Activated naive CD8-positive, alpha-beta T cell treated with anti-CD3 and anti-CD28 coated beads, Interleukin-2, amount 10 ng/mL, durations not matched to agents 7 days and 5 days (primary cell): ENCODE measurements at regions of chr9 and their contacts with region 1.

Region 1: DNA sequence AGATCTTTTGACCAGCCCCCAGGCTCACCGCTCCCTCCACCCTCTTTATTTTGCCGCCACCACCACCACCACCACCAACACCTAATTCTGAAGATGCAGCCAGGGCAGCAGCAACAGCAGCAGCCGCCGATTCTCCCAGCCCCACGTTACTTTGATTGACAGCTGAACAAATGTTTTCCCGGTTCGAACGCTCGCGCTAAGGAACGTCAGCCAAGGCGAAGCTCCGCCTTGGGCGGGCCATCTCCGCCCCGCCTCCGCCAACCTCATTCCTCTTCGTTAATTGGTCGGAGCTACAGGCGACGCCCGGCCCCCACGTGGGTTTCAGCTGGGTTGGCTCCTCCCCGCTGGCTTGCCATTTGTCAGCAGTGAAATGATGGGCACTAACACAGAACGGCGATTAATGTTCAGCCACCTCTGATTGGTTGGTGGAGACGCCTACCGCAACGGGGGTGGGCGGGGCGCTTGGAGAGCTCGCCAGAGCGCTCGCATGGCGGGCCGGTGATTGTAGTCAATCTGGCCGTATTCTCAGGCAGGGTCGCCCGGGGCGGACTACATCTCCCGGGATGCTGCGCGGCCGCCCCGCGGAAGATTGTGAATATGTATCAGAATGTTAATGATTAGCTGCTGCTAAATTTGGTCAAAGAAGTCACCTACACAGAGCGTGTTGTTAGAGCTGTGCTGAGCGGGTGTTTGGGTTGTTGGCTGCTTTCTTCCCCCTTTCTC is at the start of gene TLE4:
- DNase-seq: peak; percentile 97
- ATAC-seq: peak; percentile 88
- H3K4me3 Mint-ChIP-seq: peak within 1 kb of the TSS; percentile 67
- H3K27ac Mint-ChIP-seq: peak within 1 kb of the TSS; percentile 84
- H3K4me1 Mint-ChIP-seq: peaks cover 24% of the 10 kb centered on the region
- H3K27me3 Mint-ChIP-seq: peaks cover 7% of the 10 kb centered on the region
- total RNA-seq, gene TLE4: 62.4 to 68.8 TPM

Region 2: GRCh38 chr9:79461712-79462111 is 109.8 kb before region 1 on chr9:
- POLR2A ChIA-PET with region 1: no interaction called
- DNase-seq: no peak
- ATAC-seq: no peak
- H3K4me3 Mint-ChIP-seq: no peak overlapping the region
- H3K27ac Mint-ChIP-seq: no peak overlapping the region
- H3K4me1 Mint-ChIP-seq: no peaks in the 10 kb centered on the region
- H3K27me3 Mint-ChIP-seq: no peaks in the 10 kb centered on the region

Region 3: DNA sequence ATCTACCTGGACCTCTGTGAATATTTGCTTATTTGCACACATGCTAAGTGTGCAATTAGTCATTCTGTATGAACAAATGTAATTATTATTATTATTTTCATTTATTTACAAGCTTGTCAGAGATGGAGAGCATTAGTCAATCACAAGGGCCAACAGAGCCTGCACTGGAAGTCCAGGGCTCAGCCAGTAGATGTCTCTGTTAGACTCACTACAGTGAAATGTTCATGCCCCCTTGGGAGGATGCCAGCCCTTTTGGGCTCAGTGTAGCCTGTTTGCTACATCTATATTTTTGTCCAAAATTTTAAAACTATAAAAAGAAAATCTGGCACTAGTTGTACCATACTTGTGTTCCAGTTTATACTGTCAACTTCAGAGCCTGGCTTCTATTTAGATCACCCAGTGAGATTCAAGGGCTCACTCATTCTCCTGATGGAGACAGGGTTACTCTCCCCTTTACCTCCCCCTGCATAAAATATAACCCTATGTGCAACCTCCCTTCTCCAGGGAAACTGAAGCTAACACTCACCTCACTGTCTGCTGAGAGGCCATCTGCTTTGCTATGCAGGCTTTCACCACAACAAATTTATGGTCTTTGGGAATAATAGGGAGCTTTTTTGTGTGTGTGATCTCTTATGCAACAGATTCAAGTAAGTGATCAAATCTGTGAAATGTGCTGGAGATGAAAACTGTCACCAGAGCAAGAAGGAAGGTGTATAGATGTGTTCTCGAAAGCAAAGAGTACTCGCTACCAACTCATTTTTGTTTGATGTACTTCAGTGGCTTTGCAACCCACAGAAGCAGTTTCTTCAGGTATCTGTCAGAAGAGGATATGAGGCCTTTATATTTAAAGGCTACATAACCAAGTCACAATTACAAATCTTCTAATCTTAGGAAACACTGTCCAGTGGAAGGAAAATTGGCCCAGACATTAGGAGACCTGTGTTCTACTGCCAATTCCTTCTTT is 99.6 kb before region 1 on chr9:
- POLR2A ChIA-PET with region 1: interaction called, 11 read pairs
- DNase-seq: no peak
- ATAC-seq: peak; percentile 80
- H3K4me3 Mint-ChIP-seq: peak overlapping the region; percentile 25
- H3K27ac Mint-ChIP-seq: peak overlapping the region; percentile 68
- H3K4me1 Mint-ChIP-seq: peaks cover 35% of the 10 kb centered on the region
- H3K27me3 Mint-ChIP-seq: no peaks in the 10 kb centered on the region

Region 4: DNA sequence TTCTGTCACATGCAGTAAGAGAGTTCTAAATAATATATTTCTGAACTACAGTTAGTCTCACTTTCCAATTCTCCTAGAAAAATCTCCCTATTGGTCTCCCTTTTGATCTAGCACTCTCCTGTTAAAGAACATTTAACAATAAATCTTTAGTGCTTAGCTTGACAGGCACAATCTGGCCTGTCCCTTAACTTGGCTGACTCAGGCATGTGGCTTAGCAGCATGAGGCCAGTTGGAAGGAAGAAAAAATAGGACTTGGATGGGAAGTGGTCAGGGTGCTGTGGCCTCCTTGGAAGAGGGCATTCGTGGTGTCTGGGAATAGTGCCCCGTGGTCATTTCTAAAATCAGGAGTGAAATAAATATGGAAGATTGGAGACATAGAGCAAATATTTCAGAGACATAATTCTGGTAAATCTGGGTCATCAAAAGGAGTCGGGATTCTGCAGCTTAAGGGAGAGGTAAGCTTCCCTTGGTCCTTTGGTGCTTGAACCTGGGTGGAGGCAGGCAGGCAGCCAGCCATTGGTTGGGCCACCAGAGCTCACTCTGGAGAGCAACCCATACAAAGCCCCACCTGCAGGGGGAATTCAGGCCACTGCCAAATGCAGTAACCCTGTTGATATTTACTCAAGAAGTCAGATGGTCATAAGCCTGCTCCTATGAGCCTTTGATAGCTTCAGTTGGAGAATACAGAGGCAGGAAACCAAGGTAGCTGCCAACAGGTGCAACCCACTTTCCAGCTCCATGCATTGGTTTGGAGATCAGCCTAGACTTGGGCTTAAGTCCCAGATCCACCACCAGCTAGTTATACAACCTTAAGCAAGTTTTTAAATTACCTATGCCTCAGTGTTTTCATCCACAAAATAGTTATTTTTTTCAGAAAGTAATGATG is 28.5 kb before region 1 on chr9:
- POLR2A ChIA-PET with region 1: interaction called, 33 read pairs
- DNase-seq: no peak
- ATAC-seq: no peak
- H3K4me3 Mint-ChIP-seq: no peak overlapping the region
- H3K27ac Mint-ChIP-seq: peak overlapping the region; percentile 30
- H3K4me1 Mint-ChIP-seq: peaks cover 22% of the 10 kb centered on the region
- H3K27me3 Mint-ChIP-seq: peaks cover 1% of the 10 kb centered on the region

Region 5: GRCh38 chr9:79583952-79584654 is 12.6 kb after region 1 on chr9:
- POLR2A ChIA-PET with region 1: interaction called, 45 read pairs
- DNase-seq: no peak
- ATAC-seq: peak; percentile 84
- H3K4me3 Mint-ChIP-seq: peak overlapping the region; percentile 49
- H3K27ac Mint-ChIP-seq: peak overlapping the region; percentile 31
- H3K4me1 Mint-ChIP-seq: peaks cover 46% of the 10 kb centered on the region
- H3K27me3 Mint-ChIP-seq: no peaks in the 10 kb centered on the region

Region 6: DNA sequence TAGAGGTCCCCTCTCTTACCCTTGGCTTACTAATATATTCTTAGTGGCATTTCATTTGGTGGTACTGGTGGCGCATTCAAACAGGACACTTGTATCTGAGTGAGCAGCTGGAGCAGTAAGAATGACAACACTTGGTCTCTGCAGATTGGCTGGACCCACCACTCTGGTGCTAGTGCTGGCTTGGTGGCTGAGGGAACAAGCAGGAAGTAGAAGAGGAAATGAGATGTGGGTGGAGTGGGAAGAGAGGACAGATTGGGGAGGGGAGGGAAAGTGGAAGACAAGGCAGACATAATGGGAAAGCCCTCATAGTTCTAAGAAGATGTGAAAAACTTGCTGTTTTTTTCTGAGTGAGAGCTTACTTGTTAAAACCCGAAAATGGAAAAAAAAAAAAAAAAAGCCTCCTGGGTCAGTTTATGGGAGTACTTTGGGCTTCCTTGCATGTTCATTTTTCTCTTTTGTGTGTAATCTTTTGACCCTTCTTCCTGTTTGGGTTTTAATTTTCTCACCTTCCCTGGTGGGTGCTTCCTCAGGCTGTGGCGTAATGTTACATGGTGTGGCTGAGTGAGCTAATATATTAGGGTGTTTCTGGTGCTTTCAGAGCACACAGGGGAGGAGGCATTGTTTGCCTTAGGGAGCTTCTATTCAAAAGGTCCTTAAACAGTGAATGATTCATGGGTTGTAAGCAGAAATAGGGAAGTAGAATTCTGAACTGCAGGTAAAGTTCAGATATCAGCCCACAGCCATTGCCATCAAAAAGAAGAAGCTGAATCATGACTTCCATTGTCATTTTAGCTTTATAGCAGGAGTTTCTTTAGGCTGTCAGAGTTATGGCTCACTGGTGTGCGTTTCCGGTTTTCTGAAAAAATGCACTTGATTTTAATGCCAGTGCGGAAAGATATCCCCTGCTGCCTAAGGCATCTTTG is 52.6 kb after region 1 on chr9:
- POLR2A ChIA-PET with region 1: interaction called, 12 read pairs
- DNase-seq: peak; percentile 43
- ATAC-seq: peak; percentile 87
- H3K4me3 Mint-ChIP-seq: peak overlapping the region; percentile 62
- H3K27ac Mint-ChIP-seq: peak overlapping the region; percentile 81
- H3K4me1 Mint-ChIP-seq: peaks cover 29% of the 10 kb centered on the region
- H3K27me3 Mint-ChIP-seq: no peaks in the 10 kb centered on the region

Region 7: DNA sequence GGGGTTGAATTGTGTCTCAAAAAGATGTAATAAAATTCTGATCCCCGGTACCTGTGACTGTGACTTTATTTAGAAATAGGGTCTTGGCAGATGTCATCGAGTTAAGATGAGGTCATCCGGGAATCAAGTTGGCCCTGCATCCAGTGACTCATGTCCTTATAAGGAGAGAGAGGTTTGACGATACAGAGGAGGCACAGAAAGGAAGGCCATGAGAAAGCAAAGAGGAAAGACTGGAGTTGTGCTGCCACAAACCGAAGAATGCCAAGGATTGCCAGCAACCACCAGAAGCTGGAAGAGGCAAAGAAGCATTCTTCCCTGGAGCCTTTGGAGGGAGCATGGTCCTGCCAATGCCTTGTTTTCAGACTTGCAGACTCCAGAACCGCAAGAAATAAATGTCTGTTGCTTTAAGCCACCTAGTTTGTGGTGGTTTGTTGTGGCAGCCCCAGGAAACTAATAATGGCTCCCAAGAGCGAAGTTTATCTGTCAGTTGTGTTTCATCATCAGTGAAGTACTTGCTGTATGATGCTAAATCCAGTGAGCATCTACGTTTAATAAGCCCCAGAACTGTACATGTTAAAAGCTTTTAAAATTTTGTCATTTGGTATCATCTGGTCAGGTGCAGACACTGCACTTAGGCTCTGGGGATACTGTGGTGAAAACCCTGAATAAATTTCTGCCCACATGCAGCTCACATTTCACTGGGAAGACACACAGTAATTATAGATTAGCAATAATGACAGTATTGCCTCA is 115.1 kb after region 1 on chr9:
- POLR2A ChIA-PET with region 1: interaction called, 28 read pairs
- DNase-seq: no peak
- ATAC-seq: peak; percentile 36
- H3K4me3 Mint-ChIP-seq: peak overlapping the region; percentile 59
- H3K27ac Mint-ChIP-seq: peak overlapping the region; percentile 94
- H3K4me1 Mint-ChIP-seq: peaks cover 41% of the 10 kb centered on the region
- H3K27me3 Mint-ChIP-seq: no peaks in the 10 kb centered on the region

Region 8: DNA sequence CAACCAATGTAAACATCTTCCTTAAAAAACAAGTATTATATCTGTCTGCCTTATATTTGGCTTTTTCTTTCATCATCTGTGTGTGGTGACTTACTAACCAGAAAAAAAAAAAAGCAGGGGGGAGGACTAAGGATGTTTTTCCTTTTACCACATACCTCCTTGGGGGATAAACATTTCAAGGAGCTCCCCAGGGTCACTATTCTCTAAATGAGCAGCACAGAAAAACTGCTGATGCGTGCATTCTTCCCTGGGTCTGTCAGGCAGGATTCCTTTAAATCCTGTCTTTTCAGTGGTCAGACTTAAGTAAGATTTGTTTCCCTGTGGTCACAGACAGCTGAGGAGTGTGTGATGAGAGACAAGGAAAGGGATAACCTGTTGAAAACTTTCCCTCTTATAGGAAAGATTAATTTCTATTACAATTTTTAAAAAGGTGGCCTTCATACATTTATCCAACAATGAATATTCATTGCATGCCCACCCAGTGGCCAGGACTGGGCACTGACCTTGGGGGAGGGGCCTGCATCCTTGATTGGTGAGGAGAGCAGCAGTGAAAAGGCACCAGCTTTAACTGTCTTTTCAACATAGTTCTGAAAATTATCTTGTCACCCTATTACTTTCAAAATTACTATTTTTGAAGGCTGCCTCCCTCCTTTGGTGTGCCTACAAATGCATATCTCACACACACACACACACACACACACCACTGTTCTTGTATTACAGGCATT is 123.4 kb after region 1 on chr9:
- POLR2A ChIA-PET with region 1: interaction called, 16 read pairs
- DNase-seq: no peak
- ATAC-seq: no peak
- H3K4me3 Mint-ChIP-seq: no peak overlapping the region
- H3K27ac Mint-ChIP-seq: peak overlapping the region; percentile 17
- H3K4me1 Mint-ChIP-seq: peaks cover 49% of the 10 kb centered on the region
- H3K27me3 Mint-ChIP-seq: peaks cover 2% of the 10 kb centered on the region